Astrocyte of the cerebellum (primary cell): ENCODE measurements at regions of chr10 and their contacts with region 1.

Region 1: GRCh38 chr10:89553064-89553734 is 17.8 kb upstream of the SLC16A12 start:
- DNase-seq: peak; percentile 84
- H3K4me3 ChIP-seq: no peak overlapping the region
- CTCF ChIP-seq: no peak

Region 2: DNA sequence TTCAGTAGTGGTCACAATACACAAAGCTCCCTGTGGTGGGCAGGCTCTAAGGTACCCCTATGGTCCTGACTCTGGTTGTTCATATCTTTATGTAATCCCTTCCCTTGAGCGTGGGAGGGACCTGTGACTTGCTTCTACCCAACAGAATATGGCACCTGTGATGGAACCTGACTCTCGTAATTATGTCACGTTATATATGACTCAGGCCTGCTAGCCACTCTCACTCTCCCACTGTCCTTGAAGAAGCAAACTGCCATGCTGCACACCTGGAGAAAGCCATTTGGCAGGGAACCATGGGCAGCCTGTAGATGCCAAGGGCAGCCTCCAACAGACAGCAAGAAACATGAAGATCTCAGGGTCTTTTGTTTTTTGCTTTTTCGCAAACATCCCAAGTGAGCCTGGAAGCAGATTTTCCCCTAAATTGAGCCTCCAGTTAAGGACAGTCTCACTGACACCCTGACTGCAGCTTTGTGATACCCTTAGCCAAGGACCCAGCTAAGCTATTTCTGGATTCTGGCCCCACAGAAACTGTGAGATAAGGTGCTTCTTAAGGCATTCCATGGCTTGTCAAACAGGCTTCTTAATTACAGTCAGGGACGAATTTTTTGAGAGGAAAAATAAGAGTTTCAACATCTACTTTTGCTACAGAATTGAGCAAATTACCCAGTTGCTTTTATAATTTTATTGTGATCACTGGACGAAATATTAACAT is 89.2 kb before region 1 on chr10:
- in situ Hi-C with region 1: loop called (anchors 5 kb)
- DNase-seq: no peak
- H3K4me3 ChIP-seq: no peak overlapping the region
- CTCF ChIP-seq: no peak

Region 3: DNA sequence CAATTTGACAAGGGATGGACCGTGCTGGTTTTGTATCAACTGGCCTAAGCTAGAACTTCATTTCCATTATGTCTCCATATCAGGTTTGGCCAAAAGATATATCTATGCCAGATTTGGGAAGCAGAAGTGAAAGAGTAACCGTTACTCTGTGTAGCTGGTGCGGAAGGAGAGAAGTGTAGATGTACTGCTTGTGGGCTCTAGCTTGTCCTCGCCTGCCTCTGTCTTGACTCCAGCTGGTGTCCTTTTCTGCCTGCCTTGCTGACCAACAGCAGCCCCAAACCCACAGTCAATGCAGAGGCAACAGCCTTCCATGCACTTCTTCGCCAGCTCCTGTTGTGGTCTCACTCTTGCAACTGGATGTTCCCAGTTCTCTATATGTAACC is 276.7 kb after region 1 on chr10:
- in situ Hi-C with region 1: no loop called
- DNase-seq: no peak
- H3K4me3 ChIP-seq: no peak overlapping the region
- CTCF ChIP-seq: no peak